CD4-positive, alpha-beta T cell (primary cell): ENCODE measurements at regions of chr4 and their contacts with region 1.

Region 1: GRCh38 chr4:38730830-38731646 is 51.8 kb downstream of the TLR10 start:
- DNase-seq: peak; percentile 67 to 92 (median 80)
- ATAC-seq: peak; percentile 79
- H3K4me3 ChIP-seq: no peak overlapping the region
- H3K4me3 Mint-ChIP-seq: no peak overlapping the region
- H3K27ac ChIP-seq: no peak overlapping the region
- H3K27ac Mint-ChIP-seq: no peak overlapping the region
- H3K4me1 ChIP-seq: peaks cover 18% of the 10 kb centered on the region
- H3K4me1 Mint-ChIP-seq: peaks cover 20% of the 10 kb centered on the region
- H3K27me3 ChIP-seq: no peaks in the 10 kb centered on the region
- H3K27me3 Mint-ChIP-seq: no peaks in the 10 kb centered on the region
- CTCF ChIP-seq: peak; percentile 99

Region 2: GRCh38 chr4:38069271-38069760 is 661.7 kb before region 1 on chr4:
- CTCF ChIA-PET with region 1: interaction called, 10 read pairs
- POLR2A ChIA-PET with region 1: no interaction called
- intact Hi-C with region 1: no loop called
- DNase-seq: peak in 12 of 14 experiments; percentile 11 to 70 (median 40)
- ATAC-seq: peak; percentile 84
- H3K4me3 ChIP-seq: no peak overlapping the region
- H3K4me3 Mint-ChIP-seq: no peak overlapping the region
- H3K27ac ChIP-seq: no peak overlapping the region
- H3K27ac Mint-ChIP-seq: no peak overlapping the region
- H3K4me1 ChIP-seq: no peaks in the 10 kb centered on the region
- H3K4me1 Mint-ChIP-seq: peaks cover 13% of the 10 kb centered on the region
- H3K27me3 ChIP-seq: no peaks in the 10 kb centered on the region
- H3K27me3 Mint-ChIP-seq: no peaks in the 10 kb centered on the region
- CTCF ChIP-seq: peak; percentile 59

Region 3: DNA sequence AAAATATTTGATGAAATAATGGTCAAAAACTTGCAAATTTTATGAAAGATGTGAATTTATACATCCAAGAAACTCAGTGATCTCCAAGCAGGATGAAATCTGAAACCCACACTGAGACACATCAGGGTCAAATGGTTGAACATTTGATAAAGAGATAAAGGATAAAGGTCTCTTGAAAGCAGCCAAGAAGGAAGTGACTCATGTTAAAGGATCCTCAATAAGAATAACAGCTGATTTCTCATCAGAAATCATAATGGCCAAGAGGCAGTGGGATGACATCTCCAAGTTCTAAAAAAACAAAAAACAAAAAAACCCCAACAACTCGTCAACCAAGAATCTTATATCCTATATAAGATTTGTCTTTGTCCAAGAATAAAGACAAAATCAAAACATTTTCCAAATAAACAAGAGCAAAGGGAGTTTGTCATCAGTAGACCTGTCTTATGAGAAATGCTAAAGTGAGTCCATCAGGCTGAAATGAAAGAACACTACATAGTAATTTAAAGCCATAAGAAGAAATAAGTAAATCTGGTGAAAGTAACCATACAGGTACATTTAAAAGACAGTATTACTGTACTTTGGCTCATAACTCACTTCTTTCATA is 1125.0 kb after region 1 on chr4:
- CTCF ChIA-PET with region 1: no interaction called
- POLR2A ChIA-PET with region 1: no interaction called
- intact Hi-C with region 1: no loop called
- DNase-seq: no peak
- ATAC-seq: no peak
- H3K4me3 ChIP-seq: no peak overlapping the region
- H3K4me3 Mint-ChIP-seq: no peak overlapping the region
- H3K27ac ChIP-seq: no peak overlapping the region
- H3K27ac Mint-ChIP-seq: no peak overlapping the region
- H3K4me1 ChIP-seq: no peaks in the 10 kb centered on the region
- H3K4me1 Mint-ChIP-seq: no peaks in the 10 kb centered on the region
- H3K27me3 ChIP-seq: no peaks in the 10 kb centered on the region
- H3K27me3 Mint-ChIP-seq: no peaks in the 10 kb centered on the region
- CTCF ChIP-seq: no peak